HepG2 (cell line): ENCODE measurements at regions of chr6 and their contacts with region 1.

Region 1: DNA sequence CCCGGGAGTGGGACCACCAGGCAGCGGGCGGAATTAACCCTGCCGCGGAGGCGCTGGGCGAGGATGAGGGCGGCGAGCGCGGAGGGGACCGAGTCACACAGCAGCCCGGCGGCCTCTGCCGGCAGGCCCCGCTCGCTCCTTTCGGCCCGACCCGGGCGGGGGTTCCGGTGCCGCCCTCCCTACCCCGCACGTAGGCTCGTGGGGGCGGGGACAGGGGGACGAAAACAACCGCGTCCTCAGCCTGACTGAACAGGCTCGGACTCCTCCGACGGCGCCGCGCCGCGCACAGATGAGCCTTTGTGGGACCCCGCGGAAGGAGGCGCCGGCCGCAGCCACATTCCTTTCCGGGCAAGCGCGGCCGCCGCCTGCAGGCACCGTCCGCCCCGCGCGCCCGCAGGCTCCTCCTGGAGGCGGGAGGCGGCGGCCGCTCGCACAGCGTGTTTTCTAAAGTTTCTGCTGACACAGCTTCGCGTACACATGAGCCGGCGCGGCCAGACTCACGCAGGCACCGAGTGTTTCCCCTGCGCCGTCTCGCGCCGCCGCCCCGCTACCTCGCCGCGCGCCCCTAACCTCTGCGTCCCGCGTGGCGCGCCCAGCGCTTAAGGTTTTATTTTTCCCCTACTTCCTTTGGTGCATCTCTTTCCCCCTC is 244.3 kb downstream of the ARID1B start:
- DNase-seq: peak; percentile 91
- ATAC-seq: peak; percentile 94
- H3K4me3 ChIP-seq: peak overlapping the region; percentile 89 to 98 (median 92)
- H3K27ac ChIP-seq: peak overlapping the region; percentile 98
- H3K4me1 ChIP-seq: peaks cover 28% of the 10 kb centered on the region
- H3K27me3 ChIP-seq: no peaks in the 10 kb centered on the region; a peak in 1 of 5 replicates
- CTCF ChIP-seq: peak; percentile 72
- EP300 ChIP-seq: peak in 1 of 2 experiments; percentile 25; a peak in 1 of 4 replicates
- POLR2A ChIP-seq: peak; percentile 96 to 99
- RAD21 ChIP-seq: peak; percentile 82

Region 2: GRCh38 chr6:156933201-156934068 is 88.0 kb before region 1 on chr6:
- CTCF ChIA-PET with region 1: no interaction called
- POLR2A ChIA-PET with region 1: interaction called, 3 read pairs
- in situ Hi-C with region 1: no loop called
- intact Hi-C with region 1: loop called (anchors 5 kb)
- DNase-seq: peak; percentile 93
- ATAC-seq: peak; percentile 99
- H3K4me3 ChIP-seq: peak overlapping the region in 2 of 3 experiments; percentile 30 to 31; a peak in 2 of 6 replicates
- H3K27ac ChIP-seq: peak overlapping the region; percentile 81
- H3K4me1 ChIP-seq: peaks cover 38% of the 10 kb centered on the region
- H3K27me3 ChIP-seq: no peaks in the 10 kb centered on the region
- CTCF ChIP-seq: peak; percentile 60
- EP300 ChIP-seq: peak in 1 of 2 experiments; percentile 59; a peak in 2 of 4 replicates
- POLR2A ChIP-seq: 0 out of 4 replicates have a peak, but pooled peaks of 1 of the 2 experiments have one; percentile 20
- RAD21 ChIP-seq: 0 out of 2 replicates have a peak, but pooled peaks have one; percentile 19

Region 3: GRCh38 chr6:156953479-156954146 is 67.9 kb before region 1 on chr6:
- CTCF ChIA-PET with region 1: no interaction called
- POLR2A ChIA-PET with region 1: no interaction called
- in situ Hi-C with region 1: no loop called
- intact Hi-C with region 1: loop called (anchors 5 kb)
- DNase-seq: peak; percentile 95
- ATAC-seq: peak; percentile 95
- H3K4me3 ChIP-seq: peak overlapping the region in 1 of 3 experiments; percentile 28; a peak in 3 of 6 replicates
- H3K27ac ChIP-seq: peak overlapping the region; percentile 69
- H3K4me1 ChIP-seq: peaks cover 26% of the 10 kb centered on the region
- H3K27me3 ChIP-seq: no peaks in the 10 kb centered on the region
- CTCF ChIP-seq: peak; percentile 63
- EP300 ChIP-seq: no peak
- POLR2A ChIP-seq: no peak
- RAD21 ChIP-seq: no peak